Activated CD4-positive, alpha-beta memory T cell treated with anti-CD3 and anti-CD28 coated beads, Interleukin-2, amount 10 ng/mL, durations not matched to agents 7 days and 5 days (primary cell): ENCODE measurements at regions of chr2 and their contacts with region 1.

Region 1: GRCh38 chr2:9703085-9703641 is 72.4 kb upstream of the YWHAQ start:
- DNase-seq: peak; percentile 96
- H3K4me3 Mint-ChIP-seq: peak overlapping the region; percentile 9
- H3K27ac Mint-ChIP-seq: peak overlapping the region; percentile 92
- H3K4me1 Mint-ChIP-seq: peaks cover 79% of the 10 kb centered on the region
- H3K27me3 Mint-ChIP-seq: no peaks in the 10 kb centered on the region

Region 2: DNA sequence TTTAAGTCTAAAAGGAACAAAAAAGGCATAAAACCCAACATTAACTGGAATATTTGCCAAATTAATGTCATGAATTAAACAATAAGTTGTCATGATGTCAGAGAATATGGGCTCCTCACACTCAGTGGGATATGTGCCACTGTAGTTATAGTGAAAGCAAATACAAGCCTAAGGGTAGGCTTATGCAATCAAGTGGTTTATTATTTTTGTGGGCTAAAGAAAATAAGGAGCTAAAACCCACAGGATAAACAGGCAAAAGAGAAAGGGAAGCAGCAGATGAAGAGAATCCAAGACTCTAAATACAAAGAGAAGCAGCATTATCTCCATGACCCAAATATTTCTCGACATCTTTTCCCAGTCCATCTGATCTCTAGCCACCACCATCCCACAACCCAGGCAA is 89.9 kb before region 1 on chr2:
- CTCF ChIA-PET with region 1: interaction called, 8 read pairs
- POLR2A ChIA-PET with region 1: interaction called, 10 read pairs
- DNase-seq: no peak
- H3K4me3 Mint-ChIP-seq: no peak overlapping the region
- H3K27ac Mint-ChIP-seq: no peak overlapping the region
- H3K4me1 Mint-ChIP-seq: peaks cover 89% of the 10 kb centered on the region
- H3K27me3 Mint-ChIP-seq: no peaks in the 10 kb centered on the region

Region 3: GRCh38 chr2:9681427-9681817 is 21.7 kb before region 1 on chr2:
- CTCF ChIA-PET with region 1: interaction called, 10 read pairs
- POLR2A ChIA-PET with region 1: interaction called, 10 read pairs
- DNase-seq: peak; percentile 70
- H3K4me3 Mint-ChIP-seq: no peak overlapping the region
- H3K27ac Mint-ChIP-seq: peak overlapping the region; percentile 89
- H3K4me1 Mint-ChIP-seq: peaks cover 22% of the 10 kb centered on the region
- H3K27me3 Mint-ChIP-seq: peaks cover 1% of the 10 kb centered on the region

Region 4: GRCh38 chr2:9739531-9739964 is 36.4 kb after region 1 on chr2:
- CTCF ChIA-PET with region 1: interaction called, 9 read pairs
- POLR2A ChIA-PET with region 1: interaction called, 40 read pairs
- DNase-seq: peak; percentile 77
- H3K4me3 Mint-ChIP-seq: peak overlapping the region; percentile 72
- H3K27ac Mint-ChIP-seq: peak overlapping the region; percentile 93
- H3K4me1 Mint-ChIP-seq: peaks cover 61% of the 10 kb centered on the region
- H3K27me3 Mint-ChIP-seq: peaks cover 2% of the 10 kb centered on the region